Right lobe of liver (tissue), 6 donors: ENCODE measurements at regions of chr12 and their contacts with region 1.

Region 1: GRCh38 chr12:109134186-109134917 is 18.0 kb downstream of the ACACB start:
- DNase-seq: peak; percentile 78 to 94 (median 90)
- ATAC-seq: peak; percentile 66 to 73 (median 68)
- H3K4me3 ChIP-seq: peak overlapping the region in 2 of 3 donors; percentile 69 to 76
- H3K27ac ChIP-seq: peak overlapping the region; percentile 15 to 87 (median 32)
- H3K4me1 ChIP-seq: peaks cover 0 to 62% (median 18%) of the 10 kb centered on the region in 4 donors
- H3K27me3 ChIP-seq: no peaks in the 10 kb centered on the region
- CTCF ChIP-seq: peak; percentile 68 to 87 (median 76)
- POLR2A ChIP-seq: no peak

Region 2: DNA sequence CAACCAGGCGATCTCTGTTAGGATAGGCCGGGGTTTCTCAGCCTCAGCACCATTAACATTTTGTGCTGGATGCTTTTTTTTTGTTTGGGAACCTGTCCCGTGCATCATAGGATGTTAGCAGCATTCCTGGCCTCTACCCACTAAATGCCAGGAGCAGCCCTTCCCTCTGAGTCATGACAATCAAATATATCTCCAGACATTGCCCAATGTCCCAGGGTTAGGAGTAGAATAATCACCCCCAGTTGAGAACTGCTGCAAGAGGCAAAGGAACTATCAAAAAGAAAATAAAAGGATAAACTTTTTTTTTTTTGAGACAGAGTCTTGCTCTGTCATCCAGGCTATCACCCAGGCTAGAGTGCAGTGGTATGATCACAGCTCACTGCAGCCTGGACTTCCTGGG is 58.0 kb after region 1 on chr12:
- intact Hi-C with region 1: loop called (anchors 10 kb)
- DNase-seq: peak in 1 of 3 donors; percentile 24
- ATAC-seq: peak in 3 of 4 donors; percentile 15 to 79 (median 46)
- H3K4me3 ChIP-seq: no peak overlapping the region
- H3K27ac ChIP-seq: peak overlapping the region in 1 of 3 donors; percentile 10
- H3K4me1 ChIP-seq: peaks cover 0 to 14% (median 6%) of the 10 kb centered on the region in 4 donors
- H3K27me3 ChIP-seq: no peaks in the 10 kb centered on the region
- CTCF ChIP-seq: no peak
- POLR2A ChIP-seq: no peak